ENCODE measurements at regions of chr14 and their contacts with region 1.

Region 1: GRCh38 chr14:81303248-81304221 is 82.8 kb upstream of the GTF2A1 start:
- DNase-seq: peak; percentile 51 to 77 (median 59)
- ATAC-seq: peak; percentile 88
- H3K4me3 ChIP-seq: no peak overlapping the region
- H3K27ac ChIP-seq: peak overlapping the region; percentile 87
- H3K4me1 ChIP-seq: peaks cover 15 to 30% of the 10 kb centered on the region in 2 experiments; a peak in 4 of 5 replicates
- H3K27me3 ChIP-seq: no peaks in the 10 kb centered on the region
- CTCF ChIP-seq: no peak
- EP300 ChIP-seq: peak; percentile 48; the same call in 1 of the 2 replicates
- POLR2A ChIP-seq: no peak
- RAD21 ChIP-seq: no peak

Region 2: DNA sequence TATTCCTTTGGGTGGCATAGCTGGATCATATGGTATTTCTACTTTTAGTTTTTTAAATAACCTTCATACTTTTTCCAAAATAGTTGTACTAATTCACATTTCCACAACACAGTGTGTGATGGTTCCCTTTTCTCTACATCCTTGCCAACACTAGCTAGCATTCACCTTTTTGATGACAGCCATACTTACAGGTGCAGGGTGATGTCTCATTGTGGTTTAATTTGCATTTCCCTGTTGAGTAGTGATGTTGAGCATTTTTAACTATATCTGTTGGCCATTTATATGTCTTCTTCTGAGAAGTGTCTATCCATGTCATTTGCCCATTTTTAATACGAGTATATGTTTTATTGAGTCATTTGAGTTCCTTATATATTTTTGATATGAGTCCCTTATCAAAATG is 252.0 kb before region 1 on chr14:
- CTCF ChIA-PET with region 1: no interaction called
- POLR2A ChIA-PET with region 1: no interaction called
- in situ Hi-C with region 1: no loop called
- intact Hi-C with region 1: no loop called
- DNase-seq: no peak
- ATAC-seq: no peak
- H3K4me3 ChIP-seq: no peak overlapping the region
- H3K27ac ChIP-seq: no peak overlapping the region
- H3K4me1 ChIP-seq: no peaks in the 10 kb centered on the region
- H3K27me3 ChIP-seq: no peaks in the 10 kb centered on the region
- CTCF ChIP-seq: no peak
- EP300 ChIP-seq: no peak
- POLR2A ChIP-seq: no peak
- RAD21 ChIP-seq: no peak

Region 3: DNA sequence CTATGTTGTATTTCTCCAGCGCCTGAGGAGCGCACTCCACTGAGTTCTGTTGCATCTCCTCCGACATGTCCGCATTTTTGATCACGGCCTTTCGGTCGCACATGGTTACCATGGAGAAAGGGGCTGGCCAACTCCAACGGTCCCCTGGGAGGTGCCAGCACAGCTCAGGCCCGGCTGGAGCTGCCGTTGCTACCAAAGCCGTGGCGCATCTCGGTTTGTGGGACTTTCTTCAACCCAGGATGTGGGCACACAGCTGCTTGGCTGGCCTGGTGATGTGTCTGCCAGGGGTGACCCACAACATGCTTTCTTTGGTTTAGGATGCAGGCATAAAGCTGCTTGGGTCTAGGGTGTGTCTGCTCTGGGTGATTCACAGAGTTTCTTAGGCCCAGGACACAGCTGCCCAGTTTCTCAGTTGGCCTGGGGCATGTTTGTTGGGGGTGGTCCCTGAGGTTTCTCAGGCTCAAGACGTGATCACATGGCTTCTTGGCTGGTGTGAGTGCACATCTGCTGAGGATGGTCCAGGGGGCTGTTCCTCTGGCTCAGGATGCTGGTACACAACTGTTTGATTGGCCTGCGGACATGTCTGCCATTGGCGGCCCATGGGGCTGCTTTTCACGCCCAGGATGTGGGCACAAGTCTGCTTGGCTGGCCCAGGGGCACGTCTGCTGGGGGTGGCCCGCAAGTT is 56.9 kb before region 1 on chr14:
- CTCF ChIA-PET with region 1: no interaction called
- POLR2A ChIA-PET with region 1: no interaction called
- in situ Hi-C with region 1: no loop called
- intact Hi-C with region 1: no loop called
- DNase-seq: no peak
- ATAC-seq: no peak
- H3K4me3 ChIP-seq: no peak overlapping the region
- H3K27ac ChIP-seq: no peak overlapping the region
- H3K4me1 ChIP-seq: peaks cover 0 to 5% of the 10 kb centered on the region in 2 experiments; a peak in 2 of 5 replicates
- H3K27me3 ChIP-seq: no peaks in the 10 kb centered on the region
- CTCF ChIP-seq: no peak
- EP300 ChIP-seq: no peak
- POLR2A ChIP-seq: no peak
- RAD21 ChIP-seq: no peak

Region 4: GRCh38 chr14:81435391-81436295 is 132.1 kb after region 1 on chr14:
- CTCF ChIA-PET with region 1: no interaction called
- POLR2A ChIA-PET with region 1: no interaction called
- in situ Hi-C with region 1: no loop called
- intact Hi-C with region 1: loop called (anchors 5 kb)
- DNase-seq: peak; percentile 54 to 74 (median 72)
- ATAC-seq: peak; percentile 67
- H3K4me3 ChIP-seq: peak overlapping the region; percentile 59
- H3K27ac ChIP-seq: peak overlapping the region; percentile 69
- H3K4me1 ChIP-seq: peaks cover 20 to 41% of the 10 kb centered on the region in 2 experiments
- H3K27me3 ChIP-seq: no peaks in the 10 kb centered on the region
- CTCF ChIP-seq: peak in 1 of 3 experiments; percentile 14; a peak in 1 of 6 replicates
- EP300 ChIP-seq: no peak
- POLR2A ChIP-seq: no peak
- RAD21 ChIP-seq: no peak